ENCODE measurements at regions of chr3 and their contacts with region 1.

Region 1: GRCh38 chr3:155323063-155323666 is 29.7 kb upstream of the STRIT1 start:
- DNase-seq: peak in 2 of 14 experiments; percentile 20 to 41
- ATAC-seq: no peak
- H3K4me3 ChIP-seq: no peak overlapping the region
- H3K4me3 Mint-ChIP-seq: no peak overlapping the region
- H3K27ac ChIP-seq: no peak overlapping the region
- H3K27ac Mint-ChIP-seq: no peak overlapping the region
- H3K4me1 ChIP-seq: no peaks in the 10 kb centered on the region
- H3K4me1 Mint-ChIP-seq: no peaks in the 10 kb centered on the region
- H3K27me3 ChIP-seq: no peaks in the 10 kb centered on the region
- H3K27me3 Mint-ChIP-seq: no peaks in the 10 kb centered on the region
- CTCF ChIP-seq: peak; percentile 27

Region 2: DNA sequence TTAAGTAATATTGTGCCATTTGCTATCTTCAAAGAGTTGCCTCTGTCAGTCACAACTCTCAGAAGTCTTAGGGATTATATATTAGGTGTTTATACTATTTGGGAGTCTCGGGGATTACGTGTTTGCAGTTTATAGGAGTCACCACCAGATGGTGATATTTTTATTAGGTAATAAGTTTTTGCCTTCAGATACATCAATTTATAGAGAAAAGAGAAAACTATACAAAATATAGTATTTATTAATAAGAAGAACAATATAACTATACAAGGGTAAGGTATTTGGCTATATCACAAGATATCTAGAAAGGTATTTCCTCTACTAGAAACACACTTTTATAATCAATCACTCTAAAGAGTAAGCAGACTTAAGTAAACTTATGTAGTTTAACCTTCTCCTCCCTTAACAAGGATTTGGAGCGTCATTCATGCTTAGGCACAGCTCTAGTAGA is 988.2 kb before region 1 on chr3:
- CTCF ChIA-PET with region 1: no interaction called
- POLR2A ChIA-PET with region 1: no interaction called
- intact Hi-C with region 1: loop called (anchors 5 kb)
- DNase-seq: peak in 3 of 14 experiments; percentile 40 to 58 (median 55)
- ATAC-seq: peak; percentile 51
- H3K4me3 ChIP-seq: no peak overlapping the region
- H3K4me3 Mint-ChIP-seq: no peak overlapping the region
- H3K27ac ChIP-seq: no peak overlapping the region
- H3K27ac Mint-ChIP-seq: no peak overlapping the region
- H3K4me1 ChIP-seq: no peaks in the 10 kb centered on the region
- H3K4me1 Mint-ChIP-seq: no peaks in the 10 kb centered on the region
- H3K27me3 ChIP-seq: peaks cover 0 to under 1% of the 10 kb centered on the region in 2 experiments
- H3K27me3 Mint-ChIP-seq: peaks cover 20% of the 10 kb centered on the region
- CTCF ChIP-seq: peak; percentile 77

Region 3: GRCh38 chr3:154954753-154955152 is 368.4 kb before region 1 on chr3:
- CTCF ChIA-PET with region 1: no interaction called
- POLR2A ChIA-PET with region 1: no interaction called
- intact Hi-C with region 1: loop called (anchors 2 to 5 kb)
- DNase-seq: peak in 1 of 14 experiments; percentile 15
- ATAC-seq: no peak
- H3K4me3 ChIP-seq: no peak overlapping the region
- H3K4me3 Mint-ChIP-seq: no peak overlapping the region
- H3K27ac ChIP-seq: no peak overlapping the region
- H3K27ac Mint-ChIP-seq: no peak overlapping the region
- H3K4me1 ChIP-seq: no peaks in the 10 kb centered on the region
- H3K4me1 Mint-ChIP-seq: no peaks in the 10 kb centered on the region
- H3K27me3 ChIP-seq: no peaks in the 10 kb centered on the region
- H3K27me3 Mint-ChIP-seq: no peaks in the 10 kb centered on the region
- CTCF ChIP-seq: no peak

Region 4: GRCh38 chr3:155308831-155309230 is 14.3 kb before region 1 on chr3:
- CTCF ChIA-PET with region 1: no interaction called
- POLR2A ChIA-PET with region 1: no interaction called
- intact Hi-C with region 1: no loop called
- DNase-seq: no peak
- ATAC-seq: no peak
- H3K4me3 ChIP-seq: no peak overlapping the region
- H3K4me3 Mint-ChIP-seq: no peak overlapping the region
- H3K27ac ChIP-seq: no peak overlapping the region
- H3K27ac Mint-ChIP-seq: no peak overlapping the region
- H3K4me1 ChIP-seq: no peaks in the 10 kb centered on the region
- H3K4me1 Mint-ChIP-seq: no peaks in the 10 kb centered on the region
- H3K27me3 ChIP-seq: no peaks in the 10 kb centered on the region
- H3K27me3 Mint-ChIP-seq: no peaks in the 10 kb centered on the region
- CTCF ChIP-seq: no peak

Region 5: DNA sequence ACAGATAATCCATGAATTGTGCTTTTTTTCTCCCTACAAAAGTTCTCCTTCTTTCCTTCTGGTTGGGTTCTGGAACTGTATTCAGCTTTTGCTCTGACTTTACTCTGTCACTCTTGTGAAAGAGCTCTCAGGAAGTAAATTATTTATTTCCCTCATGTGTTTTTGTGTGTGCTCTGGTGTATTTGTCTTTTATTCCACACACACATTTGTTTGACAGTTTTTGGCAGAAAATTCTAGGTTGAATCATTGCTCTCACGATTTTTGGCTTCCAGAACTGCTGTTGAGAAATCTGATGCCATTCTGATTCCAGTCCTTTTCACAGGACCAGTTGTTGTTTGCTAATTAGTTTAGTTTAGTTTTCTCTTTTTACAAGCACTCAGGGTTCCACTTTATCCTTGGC is 248.9 kb after region 1 on chr3:
- CTCF ChIA-PET with region 1: no interaction called
- POLR2A ChIA-PET with region 1: no interaction called
- intact Hi-C with region 1: no loop called
- DNase-seq: no peak
- ATAC-seq: no peak
- H3K4me3 ChIP-seq: no peak overlapping the region
- H3K4me3 Mint-ChIP-seq: no peak overlapping the region
- H3K27ac ChIP-seq: no peak overlapping the region
- H3K27ac Mint-ChIP-seq: no peak overlapping the region
- H3K4me1 ChIP-seq: no peaks in the 10 kb centered on the region
- H3K4me1 Mint-ChIP-seq: no peaks in the 10 kb centered on the region
- H3K27me3 ChIP-seq: no peaks in the 10 kb centered on the region
- H3K27me3 Mint-ChIP-seq: peaks cover 4% of the 10 kb centered on the region
- CTCF ChIP-seq: no peak

Region 6: GRCh38 chr3:156317457-156318074 is 994.4 kb after region 1 on chr3:
- CTCF ChIA-PET with region 1: no interaction called
- POLR2A ChIA-PET with region 1: no interaction called
- intact Hi-C with region 1: no loop called
- DNase-seq: peak in 1 of 14 experiments; percentile 9
- ATAC-seq: no peak
- H3K4me3 ChIP-seq: no peak overlapping the region
- H3K4me3 Mint-ChIP-seq: no peak overlapping the region
- H3K27ac ChIP-seq: no peak overlapping the region
- H3K27ac Mint-ChIP-seq: no peak overlapping the region
- H3K4me1 ChIP-seq: no peaks in the 10 kb centered on the region
- H3K4me1 Mint-ChIP-seq: no peaks in the 10 kb centered on the region
- H3K27me3 ChIP-seq: no peaks in the 10 kb centered on the region
- H3K27me3 Mint-ChIP-seq: peaks cover 9% of the 10 kb centered on the region
- CTCF ChIP-seq: no peak